B cell (primary cell): ENCODE measurements at regions of chr5 and their contacts with region 1.

Region 1: GRCh38 chr5:140639148-140639979 is at the start of gene TMCO6:
- DNase-seq: peak; percentile 95
- ATAC-seq: peak; percentile 99
- H3K4me3 ChIP-seq: peak within 1 kb of the TSS; percentile 65 to 92 (median 89)
- H3K4me3 Mint-ChIP-seq: peak within 1 kb of the TSS; percentile 91
- H3K27ac ChIP-seq: peak within 1 kb of the TSS; percentile 66 to 89
- H3K27ac Mint-ChIP-seq: peak within 1 kb of the TSS; percentile 92
- H3K4me1 ChIP-seq: peaks cover 5 to 14% of the 10 kb centered on the region in 2 donors
- H3K4me1 Mint-ChIP-seq: peaks cover 24% of the 10 kb centered on the region
- H3K27me3 ChIP-seq: no peaks in the 10 kb centered on the region
- H3K27me3 Mint-ChIP-seq: no peaks in the 10 kb centered on the region
- CTCF ChIP-seq: peak; percentile 77
- total RNA-seq, gene TMCO6: 33.3 and 36.2 TPM in 2 replicates

Region 2: DNA sequence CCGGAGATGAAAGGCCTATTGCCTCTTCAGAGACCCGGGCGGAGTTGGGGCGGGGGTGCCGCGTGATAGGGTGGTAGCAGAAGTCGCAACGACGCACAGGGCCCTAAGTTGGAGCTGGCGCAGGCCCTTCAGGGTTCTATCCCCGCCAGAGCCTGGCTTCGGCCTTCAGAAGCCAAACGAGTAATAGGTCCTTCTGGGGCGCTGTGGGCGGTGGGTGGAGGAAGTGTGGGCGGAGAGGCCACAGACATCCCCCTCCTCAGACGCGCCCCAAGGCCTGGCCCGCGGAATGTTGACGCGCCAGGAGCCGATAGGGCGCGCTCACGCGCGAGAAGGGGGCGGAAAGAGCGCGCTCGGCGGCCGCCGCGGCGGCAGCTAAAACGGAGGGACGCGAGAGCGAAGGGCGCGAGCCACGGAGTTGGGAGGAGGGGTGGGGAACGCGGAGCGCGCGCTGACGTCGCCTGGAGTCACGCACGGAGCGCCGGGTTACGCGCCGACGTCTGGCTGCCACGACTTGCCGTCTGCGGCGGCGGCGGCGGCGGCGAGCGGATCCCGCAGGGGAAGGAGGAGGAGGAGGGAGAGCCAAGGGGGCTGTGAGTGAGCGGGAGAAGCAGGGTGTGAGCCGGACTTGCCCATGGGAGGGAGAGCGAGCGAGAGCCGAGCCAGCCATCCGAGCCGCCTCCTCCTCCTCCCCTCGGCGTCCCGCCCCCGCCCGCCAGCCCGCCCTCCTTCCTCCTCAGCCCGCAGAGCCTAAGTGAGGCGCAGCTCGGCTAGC is 531.9 kb before region 1 on chr5:
- CTCF ChIA-PET with region 1: no interaction called
- POLR2A ChIA-PET with region 1: no interaction called
- intact Hi-C with region 1: loop called (anchors 1 kb)
- DNase-seq: peak; percentile 98
- ATAC-seq: peak; percentile 85
- H3K4me3 ChIP-seq: peak overlapping the region in 4 of 5 experiments; percentile 60 to 75 (median 68)
- H3K4me3 Mint-ChIP-seq: peak overlapping the region; percentile 96
- H3K27ac ChIP-seq: peak overlapping the region; percentile 97 to 99
- H3K27ac Mint-ChIP-seq: peak overlapping the region; percentile 99
- H3K4me1 ChIP-seq: peaks cover 35% of the 10 kb centered on the region in 2 donors
- H3K4me1 Mint-ChIP-seq: peaks cover 46% of the 10 kb centered on the region
- H3K27me3 ChIP-seq: peaks cover 5 to 23% (median 13%) of the 10 kb centered on the region in 4 experiments
- H3K27me3 Mint-ChIP-seq: peaks cover 20% of the 10 kb centered on the region
- CTCF ChIP-seq: peak; percentile 43

Region 3: DNA sequence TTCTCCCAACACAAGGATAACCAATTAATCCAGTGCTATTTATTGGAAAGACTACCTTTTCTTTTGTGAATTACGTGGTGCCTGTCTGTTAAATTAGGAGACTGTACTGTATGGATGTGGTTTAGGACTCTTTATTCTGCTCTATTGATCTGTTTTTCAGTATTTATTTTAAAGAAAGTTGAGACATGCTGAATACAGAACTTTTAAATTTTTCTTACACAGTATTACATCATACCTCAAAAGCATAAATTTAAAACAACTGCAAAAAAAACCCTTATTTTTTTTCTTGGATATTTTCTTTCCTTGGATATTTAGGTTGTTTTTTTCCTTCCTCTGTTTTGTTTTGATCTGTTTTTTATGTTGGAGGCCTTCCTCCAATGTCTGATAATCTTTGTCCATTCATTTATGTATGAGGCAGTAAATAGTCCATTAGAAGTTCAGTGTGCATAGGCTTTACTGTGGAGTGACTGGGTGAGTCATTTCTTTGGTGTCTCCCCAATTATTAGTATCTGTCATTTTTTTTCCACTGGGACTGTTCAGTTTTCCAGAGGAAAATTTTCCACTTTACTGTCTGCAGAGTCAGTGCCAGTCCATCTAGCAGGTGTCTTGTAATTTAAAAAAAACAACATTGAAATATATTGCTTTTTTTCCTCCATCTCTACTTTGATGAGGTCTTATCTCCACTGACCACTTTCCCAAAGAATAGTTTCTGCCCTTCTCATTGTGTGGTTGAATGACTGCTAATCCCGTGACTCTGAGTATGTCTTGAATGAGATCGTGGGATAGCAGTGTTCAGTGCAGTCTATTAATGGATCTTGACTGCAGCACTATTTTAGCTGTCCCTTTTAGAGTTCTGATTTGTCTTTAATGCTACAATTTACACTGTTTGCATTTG is 449.1 kb before region 1 on chr5:
- CTCF ChIA-PET with region 1: no interaction called
- POLR2A ChIA-PET with region 1: no interaction called
- intact Hi-C with region 1: no loop called
- DNase-seq: no peak
- ATAC-seq: no peak
- H3K4me3 ChIP-seq: no peak overlapping the region
- H3K4me3 Mint-ChIP-seq: no peak overlapping the region
- H3K27ac ChIP-seq: no peak overlapping the region
- H3K27ac Mint-ChIP-seq: no peak overlapping the region
- H3K4me1 ChIP-seq: no peaks in the 10 kb centered on the region
- H3K4me1 Mint-ChIP-seq: no peaks in the 10 kb centered on the region
- H3K27me3 ChIP-seq: no peaks in the 10 kb centered on the region
- H3K27me3 Mint-ChIP-seq: no peaks in the 10 kb centered on the region
- CTCF ChIP-seq: no peak

Region 4: DNA sequence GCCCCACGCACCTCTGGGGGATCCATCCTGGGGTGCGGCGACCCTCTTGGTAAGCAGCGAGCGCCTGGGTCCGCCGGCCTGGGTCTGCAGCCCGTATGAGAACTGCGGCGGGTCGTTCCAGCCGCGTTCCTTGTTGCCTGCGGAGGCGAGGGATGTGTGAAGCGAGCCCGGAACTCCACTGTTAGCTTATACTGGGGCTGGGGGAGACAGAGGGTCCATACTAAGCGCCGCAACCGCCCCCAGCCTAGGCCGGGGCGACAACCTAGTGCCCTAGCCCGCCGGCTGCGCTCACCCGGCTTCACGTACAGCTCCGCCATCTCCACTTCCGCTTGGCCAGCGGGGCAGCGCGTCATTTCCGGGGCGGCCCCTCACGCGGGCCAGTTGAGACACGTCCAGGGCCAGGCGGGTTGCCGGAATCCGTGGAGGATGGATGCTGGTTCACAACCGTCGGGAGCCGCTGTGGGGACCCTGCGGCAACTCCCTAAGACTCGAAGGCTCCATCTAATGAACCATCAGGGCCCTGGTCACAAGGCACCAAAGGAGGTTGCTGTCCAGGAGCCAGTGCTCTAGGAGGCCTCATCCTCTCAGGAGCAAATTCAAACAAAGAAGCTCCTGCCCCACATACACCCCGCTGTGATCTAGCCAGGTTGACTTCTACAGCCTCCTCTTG is 82.1 kb before region 1 on chr5 and contains the start of gene SRA1:
- CTCF ChIA-PET with region 1: no interaction called
- POLR2A ChIA-PET with region 1: interaction called, 3 read pairs
- intact Hi-C with region 1: loop called (anchors 2 kb)
- DNase-seq: peak; percentile 88
- ATAC-seq: peak; percentile 97
- H3K4me3 ChIP-seq: peak within 1 kb of the TSS; percentile 62 to 90 (median 78)
- H3K4me3 Mint-ChIP-seq: peak within 1 kb of the TSS; percentile 94
- H3K27ac ChIP-seq: peak within 1 kb of the TSS; percentile 85 to 90
- H3K27ac Mint-ChIP-seq: peak within 1 kb of the TSS; percentile 93
- H3K4me1 ChIP-seq: peaks cover 18 to 28% of the 10 kb centered on the region in 2 donors
- H3K4me1 Mint-ChIP-seq: peaks cover 47% of the 10 kb centered on the region
- H3K27me3 ChIP-seq: no peaks in the 10 kb centered on the region
- H3K27me3 Mint-ChIP-seq: no peaks in the 10 kb centered on the region
- CTCF ChIP-seq: no peak
- total RNA-seq, gene SRA1: 25.6 and 27.1 TPM in 2 replicates

Region 5: DNA sequence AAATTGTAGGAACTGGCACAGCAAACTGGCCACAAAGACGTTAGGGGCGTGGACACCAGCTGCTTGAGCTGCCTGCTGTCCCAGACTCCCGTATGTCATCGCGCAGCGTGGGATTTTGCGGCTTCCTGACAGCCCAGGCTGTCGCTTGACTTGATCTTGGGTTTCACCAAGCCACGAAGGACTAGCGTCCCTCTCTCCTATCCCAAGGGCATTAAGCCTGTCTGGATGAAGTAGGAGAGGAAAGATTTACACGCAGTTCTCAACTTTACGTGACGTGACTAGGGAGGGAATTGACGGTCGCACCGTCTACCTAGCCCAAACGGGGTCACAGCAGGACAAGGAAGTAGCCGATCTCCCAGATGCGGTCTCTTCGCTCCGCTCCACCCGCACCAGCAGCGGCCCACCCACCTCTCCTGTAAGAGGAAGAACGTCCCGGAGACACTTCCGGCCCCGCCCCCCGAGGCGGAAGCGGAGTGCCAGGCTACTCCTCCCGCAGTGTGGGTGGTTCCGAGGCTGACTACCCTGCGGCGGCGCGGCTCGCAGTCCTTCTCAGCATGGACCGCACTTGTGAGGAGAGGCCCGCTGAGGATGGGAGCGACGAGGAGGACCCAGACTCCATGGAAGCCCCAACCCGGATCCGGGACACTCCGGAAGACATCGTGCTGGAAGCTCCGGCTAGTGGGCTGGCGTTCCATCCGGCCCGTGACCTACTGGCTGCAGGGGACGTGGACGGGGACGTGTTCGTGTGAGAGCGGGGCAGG is 25.2 kb after region 1 on chr5 and contains the start of gene WDR55:
- CTCF ChIA-PET with region 1: no interaction called
- POLR2A ChIA-PET with region 1: no interaction called
- intact Hi-C with region 1: loop called (anchors 1 kb)
- DNase-seq: peak; percentile 94
- ATAC-seq: peak; percentile 97
- H3K4me3 ChIP-seq: peak within 1 kb of the TSS; percentile 56 to 99 (median 98)
- H3K4me3 Mint-ChIP-seq: peak within 1 kb of the TSS; percentile 99
- H3K27ac ChIP-seq: peak within 1 kb of the TSS; percentile 74 to 88
- H3K27ac Mint-ChIP-seq: peak within 1 kb of the TSS; percentile 98
- H3K4me1 ChIP-seq: peaks cover 14 to 17% of the 10 kb centered on the region in 2 donors
- H3K4me1 Mint-ChIP-seq: peaks cover 30% of the 10 kb centered on the region
- H3K27me3 ChIP-seq: no peaks in the 10 kb centered on the region
- H3K27me3 Mint-ChIP-seq: no peaks in the 10 kb centered on the region
- CTCF ChIP-seq: no peak
- total RNA-seq, gene WDR55: 44.7 and 46.2 TPM in 2 replicates

Region 6: GRCh38 chr5:140678993-140679392 is 39.6 kb after region 1 on chr5:
- CTCF ChIA-PET with region 1: no interaction called
- POLR2A ChIA-PET with region 1: no interaction called
- intact Hi-C with region 1: no loop called
- DNase-seq: no peak
- ATAC-seq: no peak
- H3K4me3 ChIP-seq: no peak overlapping the region
- H3K4me3 Mint-ChIP-seq: no peak overlapping the region
- H3K27ac ChIP-seq: no peak overlapping the region
- H3K27ac Mint-ChIP-seq: no peak overlapping the region
- H3K4me1 ChIP-seq: no peaks in the 10 kb centered on the region
- H3K4me1 Mint-ChIP-seq: no peaks in the 10 kb centered on the region
- H3K27me3 ChIP-seq: no peaks in the 10 kb centered on the region
- H3K27me3 Mint-ChIP-seq: no peaks in the 10 kb centered on the region
- CTCF ChIP-seq: no peak

Region 7: DNA sequence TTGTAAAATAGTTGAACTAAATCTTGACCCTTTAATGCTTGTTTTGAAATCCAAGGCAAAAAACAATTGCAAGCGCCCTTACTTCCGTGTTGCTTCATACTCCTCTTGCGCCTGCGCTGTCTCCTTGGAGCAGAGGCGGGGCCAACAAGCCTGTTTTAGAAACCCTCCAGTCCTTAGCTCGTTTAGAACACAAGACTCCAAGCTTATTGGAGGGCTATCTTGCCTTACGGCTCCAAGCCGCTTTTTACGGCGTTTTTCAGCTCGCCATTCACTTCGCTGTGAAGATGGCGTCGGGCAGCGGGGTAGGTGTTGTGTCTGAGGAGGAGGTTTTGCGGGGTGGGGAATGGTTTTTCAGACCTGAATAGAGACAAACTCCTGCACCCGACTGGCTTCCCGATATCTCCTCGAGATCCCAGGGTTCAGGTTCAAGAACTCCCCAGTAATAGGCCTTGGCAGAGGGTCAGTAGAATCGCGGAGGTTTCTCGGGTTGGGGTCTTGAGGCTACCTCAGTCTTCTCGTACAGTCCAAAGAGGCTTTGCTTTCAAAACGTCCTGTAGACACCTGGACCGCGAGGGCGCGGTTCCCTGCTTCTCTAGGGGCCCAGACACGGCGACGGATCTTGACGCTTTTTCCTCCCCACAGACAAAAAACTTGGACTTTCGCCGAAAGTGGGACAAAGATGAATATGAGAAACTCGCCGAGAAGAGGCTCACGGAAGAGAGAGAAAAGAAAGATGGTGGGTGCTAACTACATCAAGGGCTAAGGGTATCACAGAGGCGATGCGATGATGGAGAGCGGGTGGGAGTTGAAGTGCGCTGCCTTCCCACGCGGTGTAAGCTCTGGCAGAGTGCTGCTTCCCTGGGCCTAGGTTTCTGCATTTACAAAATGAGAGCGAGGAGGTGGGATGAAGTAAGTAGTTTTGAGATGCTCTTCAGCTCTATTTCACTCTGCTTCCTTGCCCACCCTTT is 61.1 kb after region 1 on chr5 and contains the start of gene ZMAT2:
- CTCF ChIA-PET with region 1: no interaction called
- POLR2A ChIA-PET with region 1: interaction called, 6 read pairs
- intact Hi-C with region 1: loop called (anchors 1 kb)
- DNase-seq: peak; percentile 96
- ATAC-seq: peak; percentile 99
- H3K4me3 ChIP-seq: peak within 1 kb of the TSS; percentile 58 to 97 (median 92)
- H3K4me3 Mint-ChIP-seq: peak within 1 kb of the TSS; percentile 96
- H3K27ac ChIP-seq: peak within 1 kb of the TSS; percentile 46 to 77
- H3K27ac Mint-ChIP-seq: peak within 1 kb of the TSS; percentile 91
- H3K4me1 ChIP-seq: peaks cover 13 to 16% of the 10 kb centered on the region in 2 donors
- H3K4me1 Mint-ChIP-seq: peaks cover 23% of the 10 kb centered on the region
- H3K27me3 ChIP-seq: no peaks in the 10 kb centered on the region
- H3K27me3 Mint-ChIP-seq: no peaks in the 10 kb centered on the region
- CTCF ChIP-seq: no peak
- total RNA-seq, gene ZMAT2: 55.7 and 55.8 TPM in 2 replicates